Lower leg skin (tissue), 4 donors: ENCODE measurements at regions of chr7 and their contacts with region 1.

Region 1: DNA sequence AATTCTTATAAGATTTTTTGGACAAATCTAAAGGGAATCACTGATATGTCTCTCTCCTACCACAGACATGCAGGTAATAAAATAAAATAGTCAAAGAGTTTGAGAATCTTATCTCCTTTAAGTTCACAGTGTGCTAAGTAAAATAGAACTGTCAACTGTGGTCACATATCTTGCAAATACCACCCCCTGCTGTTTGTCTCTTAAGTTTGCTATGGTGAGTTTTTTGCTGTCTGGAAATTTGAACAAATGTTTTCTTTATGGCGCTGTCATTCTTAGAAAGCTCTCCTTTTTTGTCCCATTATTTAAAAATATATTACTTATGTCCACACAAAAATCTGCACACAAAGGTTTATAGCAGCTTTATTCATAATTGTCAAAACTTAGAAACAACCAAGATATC is 19.6 kb downstream of the GIMAP5 start:
- DNase-seq: no peak
- H3K4me3 ChIP-seq: no peak overlapping the region
- CTCF ChIP-seq: no peak
- POLR2A ChIP-seq: no peak

Region 2: DNA sequence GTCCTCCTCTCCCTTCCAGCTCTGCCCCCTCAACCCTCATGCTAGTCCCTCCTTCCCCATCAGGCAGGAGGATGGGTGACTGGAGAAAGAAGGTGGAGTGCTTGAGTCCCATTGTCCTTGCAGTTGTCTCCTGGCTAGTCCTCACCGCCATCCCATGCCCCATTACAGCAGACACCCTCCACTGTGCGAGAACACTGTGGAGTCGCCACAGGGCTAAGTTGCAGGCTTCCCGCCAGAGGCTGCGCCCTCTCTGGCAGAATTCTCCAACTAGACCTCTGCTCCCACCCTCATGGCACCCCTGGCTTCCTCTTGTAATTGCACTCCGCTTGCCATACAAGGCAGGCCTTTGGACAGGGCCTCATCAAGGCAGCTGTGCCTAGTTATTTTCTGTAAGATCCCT is 68.2 kb before region 1 on chr7:
- intact Hi-C with region 1: loop called (anchors 2 kb)
- DNase-seq: no peak
- H3K4me3 ChIP-seq: no peak overlapping the region
- CTCF ChIP-seq: no peak
- POLR2A ChIP-seq: no peak

Region 3: GRCh38 chr7:150703209-150703608 is 53.6 kb before region 1 on chr7:
- intact Hi-C with region 1: no loop called
- DNase-seq: no peak
- H3K4me3 ChIP-seq: no peak overlapping the region
- CTCF ChIP-seq: no peak
- POLR2A ChIP-seq: no peak

Region 4: DNA sequence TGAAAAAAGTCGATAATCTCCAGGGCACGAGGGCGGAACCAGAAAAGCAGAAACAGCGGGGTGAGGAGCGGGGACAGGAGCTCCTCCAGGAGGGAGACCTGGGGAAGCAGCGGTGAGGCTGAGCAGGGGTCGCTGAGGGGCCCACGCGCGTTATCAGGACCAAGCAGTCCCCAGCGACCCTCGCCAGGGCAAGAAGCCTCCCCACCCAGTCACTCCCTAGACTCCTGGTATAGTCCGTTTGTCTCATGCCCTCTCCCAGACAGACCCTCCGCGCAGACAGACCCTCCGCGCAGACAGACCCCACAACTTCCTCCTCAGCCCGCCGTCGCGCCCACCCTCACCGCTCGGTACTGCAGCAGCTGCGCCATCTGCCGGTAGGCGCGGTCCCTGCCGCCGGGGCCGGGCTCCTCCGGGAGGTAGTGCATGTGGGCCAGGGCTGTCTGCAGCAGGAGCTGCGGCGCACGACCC is 261.1 kb after region 1 on chr7:
- intact Hi-C with region 1: no loop called
- DNase-seq: peak in 1 of 2 donors; percentile 93
- H3K4me3 ChIP-seq: no peak overlapping the region
- CTCF ChIP-seq: peak in 1 of 3 donors; percentile 37
- POLR2A ChIP-seq: no peak